Activated CD4-positive, alpha-beta T cell treated with anti-CD3 and anti-CD28 coated beads, Interleukin-2, amount 10 ng/mL, durations not matched to agents 24 days and 14 days (primary cell): ENCODE measurements at regions of chrX and their contacts with region 1.

Region 1: GRCh38 chrX:103629318-103630170 is 769 bp downstream of the TCEAL1 start:
- DNase-seq: peak; percentile 60
- H3K4me3 Mint-ChIP-seq: peak overlapping the region; percentile 88
- H3K27ac Mint-ChIP-seq: peak overlapping the region; percentile 72
- H3K4me1 Mint-ChIP-seq: peaks cover 7% of the 10 kb centered on the region
- H3K27me3 Mint-ChIP-seq: no peaks in the 10 kb centered on the region

Region 2: DNA sequence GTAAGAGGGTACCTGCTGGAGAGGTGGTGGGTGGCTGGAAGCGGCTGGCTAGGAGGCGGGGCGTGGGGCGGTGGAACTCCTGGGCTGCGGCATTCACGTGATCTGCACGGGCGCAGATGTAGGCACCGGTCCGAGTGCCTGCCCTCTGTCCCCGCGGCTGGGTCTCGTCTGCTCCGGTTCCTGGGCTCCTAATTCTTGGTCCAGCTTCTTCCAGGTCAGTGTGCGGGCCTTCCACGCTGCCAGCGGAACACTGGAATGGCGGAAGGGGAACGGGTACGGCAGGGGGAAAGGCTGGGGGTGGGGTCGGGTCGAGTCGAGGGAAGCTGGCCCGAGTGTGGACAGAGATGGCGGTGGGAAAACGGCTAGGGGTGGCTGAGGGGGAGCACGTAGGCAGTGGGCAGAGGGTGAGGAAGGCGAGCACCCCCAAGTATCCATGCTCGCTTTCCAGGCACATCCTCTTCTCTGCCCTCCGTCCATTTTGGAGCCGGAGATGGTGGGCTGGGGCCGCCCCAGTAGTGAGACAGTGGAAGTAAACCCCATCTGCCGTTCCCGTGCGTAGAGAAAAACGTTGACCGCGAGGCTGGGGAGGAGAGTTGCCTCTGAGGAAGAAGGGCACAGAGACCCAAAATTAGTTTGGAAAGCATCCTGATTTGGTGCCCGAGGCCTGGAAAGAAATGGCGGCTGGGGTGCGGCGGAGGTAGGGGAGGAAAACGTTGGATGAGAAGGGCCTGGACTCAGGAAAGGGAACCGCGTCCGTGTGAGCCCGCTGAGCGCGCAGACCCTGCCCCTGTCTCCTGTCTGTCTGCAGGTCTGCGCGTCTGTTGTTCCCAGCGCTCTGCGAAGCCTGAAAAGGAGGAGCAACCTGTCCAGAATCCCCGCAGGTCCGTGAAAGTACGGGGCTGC is 43.9 kb before region 1 on chrX and contains the start of gene TCEAL4:
- intact Hi-C with region 1: loop called (anchors 5 kb)
- DNase-seq: peak; percentile 57
- H3K4me3 Mint-ChIP-seq: peak within 1 kb of the TSS; percentile 83
- H3K27ac Mint-ChIP-seq: peak within 1 kb of the TSS; percentile 20
- H3K4me1 Mint-ChIP-seq: peaks cover 2% of the 10 kb centered on the region
- H3K27me3 Mint-ChIP-seq: peaks cover 13% of the 10 kb centered on the region
- total RNA-seq, gene TCEAL4: 3.7 and 4.4 TPM in 2 replicates